ENCODE measurements at regions of chr5 and their contacts with region 1.

Region 1: GRCh38 chr5:134527146-134527960 is 1.9 kb downstream of the JADE2 start:
- DNase-seq: peak; percentile 86
- H3K4me3 ChIP-seq: peak overlapping the region; percentile 85 to 91
- H3K27ac ChIP-seq: peak overlapping the region; percentile 98 to 99
- H3K4me1 ChIP-seq: peaks cover 44% of the 10 kb centered on the region
- H3K27me3 ChIP-seq: no peaks in the 10 kb centered on the region
- CTCF ChIP-seq: peak; percentile 78 to 92 (median 90)
- POLR2A ChIP-seq: no peak

Region 2: GRCh38 chr5:134465816-134466240 is 61.5 kb before region 1 on chr5:
- intact Hi-C with region 1: loop called (anchors 10 kb)
- DNase-seq: peak; percentile 90
- H3K4me3 ChIP-seq: peak overlapping the region; percentile 55 to 71
- H3K27ac ChIP-seq: peak overlapping the region; percentile 89 to 93
- H3K4me1 ChIP-seq: peaks cover 28% of the 10 kb centered on the region
- H3K27me3 ChIP-seq: no peaks in the 10 kb centered on the region
- CTCF ChIP-seq: no peak
- POLR2A ChIP-seq: no peak